ENCODE measurements at regions of chr5 and their contacts with region 1.

Region 1: GRCh38 chr5:87412630-87413342 is at the start of gene CCNH:
- DNase-seq: peak; percentile 92 to 99 (median 96)
- ATAC-seq: peak; percentile 97
- H3K4me3 ChIP-seq: peak within 1 kb of the TSS; percentile 88 to 97
- H3K4me3 Mint-ChIP-seq: peak within 1 kb of the TSS; percentile 93
- H3K27ac ChIP-seq: peak within 1 kb of the TSS; percentile 98 to 99
- H3K27ac Mint-ChIP-seq: peak within 1 kb of the TSS; percentile 93
- H3K4me1 ChIP-seq: peaks cover 29% of the 10 kb centered on the region
- H3K4me1 Mint-ChIP-seq: peaks cover 49% of the 10 kb centered on the region
- H3K27me3 ChIP-seq: no peaks in the 10 kb centered on the region
- H3K27me3 Mint-ChIP-seq: no peaks in the 10 kb centered on the region
- CTCF ChIP-seq: no peak
- total RNA-seq, gene CCNH: 275 to 279 TPM

Region 2: GRCh38 chr5:87069974-87070624 is 342.7 kb before region 1 on chr5:
- CTCF ChIA-PET with region 1: no interaction called
- POLR2A ChIA-PET with region 1: no interaction called
- intact Hi-C with region 1: loop called in 1 of 2 experiments (anchors 5 kb)
- DNase-seq: peak in 2 of 9 experiments; percentile 38 to 47
- ATAC-seq: no peak
- H3K4me3 ChIP-seq: no peak overlapping the region
- H3K4me3 Mint-ChIP-seq: no peak overlapping the region
- H3K27ac ChIP-seq: no peak overlapping the region
- H3K27ac Mint-ChIP-seq: no peak overlapping the region
- H3K4me1 ChIP-seq: peaks cover 12% of the 10 kb centered on the region
- H3K4me1 Mint-ChIP-seq: peaks cover 28% of the 10 kb centered on the region
- H3K27me3 ChIP-seq: no peaks in the 10 kb centered on the region
- H3K27me3 Mint-ChIP-seq: no peaks in the 10 kb centered on the region
- CTCF ChIP-seq: no peak

Region 3: DNA sequence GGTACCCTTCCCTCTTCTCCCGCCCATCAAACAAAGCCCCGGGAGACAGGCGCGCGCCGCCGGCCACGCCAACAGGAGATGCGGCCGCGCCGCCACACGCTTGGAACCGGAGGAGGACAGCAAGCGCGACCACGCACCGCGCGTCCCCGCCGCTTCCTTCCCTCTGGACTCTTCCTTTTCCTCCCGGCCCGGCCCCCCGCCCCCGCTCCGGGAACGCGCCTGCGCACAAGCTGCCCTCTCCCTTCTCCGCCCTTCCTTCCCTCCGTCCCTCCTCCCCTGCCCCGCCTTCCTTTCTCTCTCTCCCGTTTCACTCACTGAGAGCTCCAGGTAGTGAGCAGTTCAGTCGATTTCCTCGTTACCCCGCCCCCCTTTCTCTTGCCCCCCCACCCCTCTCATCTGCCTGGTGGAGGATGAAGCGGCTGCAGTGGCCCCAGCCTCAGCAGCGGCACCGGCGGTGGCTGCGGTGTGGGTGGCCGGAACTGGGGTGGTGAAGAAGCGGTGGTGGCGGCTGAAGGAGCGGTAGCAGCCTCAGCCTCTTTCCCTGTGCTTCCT is 145.1 kb before region 1 on chr5 and contains the start of gene RASA1:
- CTCF ChIA-PET with region 1: no interaction called
- POLR2A ChIA-PET with region 1: interaction called, 3 read pairs
- intact Hi-C with region 1: loop called (anchors 1 kb)
- DNase-seq: peak in 8 of 9 experiments; percentile 63 to 88 (median 76)
- ATAC-seq: peak; percentile 60
- H3K4me3 ChIP-seq: peak within 1 kb of the TSS; percentile 96
- H3K4me3 Mint-ChIP-seq: peak within 1 kb of the TSS; percentile 99
- H3K27ac ChIP-seq: peak within 1 kb of the TSS; percentile 69
- H3K27ac Mint-ChIP-seq: peak within 1 kb of the TSS; percentile 93
- H3K4me1 ChIP-seq: peaks cover 6% of the 10 kb centered on the region
- H3K4me1 Mint-ChIP-seq: peaks cover 28% of the 10 kb centered on the region
- H3K27me3 ChIP-seq: no peaks in the 10 kb centered on the region
- H3K27me3 Mint-ChIP-seq: no peaks in the 10 kb centered on the region
- CTCF ChIP-seq: no peak
- total RNA-seq, gene RASA1: 7.7 to 7.9 TPM

Region 4: DNA sequence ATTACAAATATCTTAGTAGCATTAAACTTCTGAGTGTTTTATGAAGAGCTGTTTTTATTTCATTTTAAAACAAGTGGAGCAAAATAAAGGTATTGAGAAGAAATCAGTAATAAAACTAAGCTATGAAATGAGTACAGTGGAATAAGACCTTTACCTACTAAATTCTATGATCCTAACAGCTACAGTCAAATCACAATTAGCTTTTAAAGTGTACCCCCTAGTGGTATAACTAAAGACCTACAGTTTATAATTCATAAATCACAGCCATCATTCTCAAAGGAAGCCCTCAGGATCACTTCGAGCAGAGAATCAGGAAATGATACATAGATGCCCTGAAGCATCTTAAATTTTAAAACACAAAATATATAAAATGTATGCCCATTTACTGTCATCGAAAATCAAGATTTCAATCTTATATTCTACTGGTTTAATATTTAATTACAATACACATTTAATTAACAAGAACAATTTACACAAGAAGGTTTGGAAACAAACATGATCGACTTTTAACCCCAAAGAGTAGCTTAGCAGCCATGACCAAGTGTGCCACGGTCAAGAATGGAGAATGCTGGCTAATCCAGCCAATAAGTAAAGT is 12.4 kb before region 1 on chr5:
- CTCF ChIA-PET with region 1: interaction called, 8 read pairs
- POLR2A ChIA-PET with region 1: interaction called, 6 read pairs
- intact Hi-C with region 1: loop called in 1 of 2 experiments (anchors 1 kb)
- DNase-seq: peak in 2 of 9 experiments; percentile 45 to 63
- ATAC-seq: peak; percentile 86
- H3K4me3 ChIP-seq: no peak overlapping the region
- H3K4me3 Mint-ChIP-seq: no peak overlapping the region
- H3K27ac ChIP-seq: no peak overlapping the region
- H3K27ac Mint-ChIP-seq: no peak overlapping the region
- H3K4me1 ChIP-seq: peaks cover 11% of the 10 kb centered on the region
- H3K4me1 Mint-ChIP-seq: peaks cover 42% of the 10 kb centered on the region
- H3K27me3 ChIP-seq: no peaks in the 10 kb centered on the region
- H3K27me3 Mint-ChIP-seq: no peaks in the 10 kb centered on the region
- CTCF ChIP-seq: peak; percentile 78

Region 5: GRCh38 chr5:89293810-89294209 is 1881.0 kb after region 1 on chr5:
- CTCF ChIA-PET with region 1: no interaction called
- POLR2A ChIA-PET with region 1: no interaction called
- intact Hi-C with region 1: no loop called
- DNase-seq: peak in 1 of 9 experiments; percentile 24
- ATAC-seq: no peak
- H3K4me3 ChIP-seq: no peak overlapping the region
- H3K4me3 Mint-ChIP-seq: no peak overlapping the region
- H3K27ac ChIP-seq: no peak overlapping the region
- H3K27ac Mint-ChIP-seq: no peak overlapping the region
- H3K4me1 ChIP-seq: no peaks in the 10 kb centered on the region
- H3K4me1 Mint-ChIP-seq: no peaks in the 10 kb centered on the region
- H3K27me3 ChIP-seq: no peaks in the 10 kb centered on the region
- H3K27me3 Mint-ChIP-seq: no peaks in the 10 kb centered on the region
- CTCF ChIP-seq: no peak

Measured in CD8-positive, alpha-beta T cell (primary cell).